ENCODE measurements at regions of chr2 and their contacts with region 1.

Region 1: DNA sequence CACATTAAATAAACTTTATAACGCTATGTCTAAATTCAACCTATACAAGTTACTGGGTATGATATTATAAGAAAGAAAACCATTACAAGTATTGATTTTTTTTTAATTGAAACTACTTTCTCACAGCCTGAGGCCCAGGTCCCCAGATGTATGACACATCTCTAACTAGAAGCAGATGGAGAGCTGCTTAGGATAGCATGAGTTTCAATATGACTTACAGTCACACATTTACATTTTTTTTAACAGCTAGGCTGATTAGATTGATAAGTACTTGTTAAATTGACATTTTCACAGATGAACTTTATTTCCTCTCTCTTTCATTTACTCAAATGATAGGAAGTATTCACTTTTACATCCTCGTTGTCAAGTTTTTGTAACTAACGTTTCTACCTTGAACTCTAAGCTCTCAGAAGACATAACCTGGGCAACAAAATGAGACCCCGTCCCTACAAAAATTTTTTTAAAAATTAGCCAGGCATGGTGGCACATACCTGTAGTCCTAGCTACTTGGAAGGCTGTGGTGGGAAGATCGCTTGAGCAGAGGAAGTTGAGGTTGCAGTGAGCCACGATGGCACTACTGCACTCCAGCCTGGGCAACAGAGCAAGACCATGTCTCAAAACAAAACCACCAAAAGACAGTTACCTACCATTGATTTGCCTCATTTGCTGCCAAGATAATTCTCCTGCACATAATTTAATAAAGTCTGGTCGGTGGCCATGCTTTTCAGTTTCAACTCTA is 52.4 kb downstream of the STK39 start:
- DNase-seq: peak in 1 of 2 donors; percentile 58
- ATAC-seq: peak; percentile 85 to 91 (median 86)
- H3K4me3 ChIP-seq: no peak overlapping the region
- H3K4me3 Mint-ChIP-seq: peak overlapping the region; percentile 89
- H3K27ac ChIP-seq: peak overlapping the region; percentile 61
- H3K27ac Mint-ChIP-seq: peak overlapping the region; percentile 94 to 96
- H3K4me1 ChIP-seq: peaks cover 58% of the 10 kb centered on the region
- H3K4me1 Mint-ChIP-seq: peaks cover 82 to 89% of the 10 kb centered on the region in 2 donors
- H3K27me3 ChIP-seq: no peaks in the 10 kb centered on the region
- H3K27me3 Mint-ChIP-seq: no peaks in the 10 kb centered on the region
- CTCF ChIP-seq: no peak

Region 2: DNA sequence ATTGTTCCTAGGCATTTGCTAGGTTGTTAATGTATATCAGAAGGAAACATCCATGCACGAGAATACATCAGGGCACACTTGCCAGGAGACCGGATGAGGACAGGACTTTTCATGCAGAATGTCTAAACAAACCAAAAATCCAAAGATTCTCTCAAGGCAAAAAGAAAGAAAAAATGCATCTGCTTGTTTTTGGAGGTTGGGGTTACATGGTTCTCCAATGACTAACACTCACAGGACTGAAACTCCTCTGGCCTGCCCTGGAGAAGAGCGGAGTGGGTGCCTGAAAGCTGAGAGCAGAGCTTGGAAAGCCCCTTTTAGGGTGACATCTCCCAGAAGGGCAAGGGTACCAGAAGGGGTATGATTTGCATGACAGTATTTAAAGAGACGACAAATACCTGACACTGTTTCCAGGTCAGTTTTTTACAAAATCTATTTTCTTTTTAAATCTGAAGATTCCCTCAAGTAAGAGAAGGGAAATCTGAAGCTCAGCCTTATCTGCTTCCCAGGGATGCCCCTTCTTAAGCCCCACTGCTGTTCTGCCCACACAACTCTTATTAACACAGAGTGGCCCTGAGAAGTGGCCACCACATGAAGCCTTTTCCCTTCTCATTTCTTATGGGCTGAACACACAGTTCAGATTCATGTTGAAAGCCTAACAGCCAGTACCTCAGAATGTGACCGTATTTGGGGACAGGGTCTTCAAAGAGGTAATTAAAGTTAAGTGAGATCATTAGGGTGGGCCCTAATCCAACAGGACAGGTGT is 163.9 kb before region 1 on chr2:
- intact Hi-C with region 1: no loop called
- DNase-seq: no peak
- ATAC-seq: no peak
- H3K4me3 ChIP-seq: no peak overlapping the region
- H3K4me3 Mint-ChIP-seq: no peak overlapping the region
- H3K27ac ChIP-seq: no peak overlapping the region
- H3K27ac Mint-ChIP-seq: peak overlapping the region; percentile 51 to 63
- H3K4me1 ChIP-seq: no peaks in the 10 kb centered on the region
- H3K4me1 Mint-ChIP-seq: peaks cover 37 to 41% of the 10 kb centered on the region in 2 donors
- H3K27me3 ChIP-seq: no peaks in the 10 kb centered on the region
- H3K27me3 Mint-ChIP-seq: no peaks in the 10 kb centered on the region
- CTCF ChIP-seq: no peak

Region 3: DNA sequence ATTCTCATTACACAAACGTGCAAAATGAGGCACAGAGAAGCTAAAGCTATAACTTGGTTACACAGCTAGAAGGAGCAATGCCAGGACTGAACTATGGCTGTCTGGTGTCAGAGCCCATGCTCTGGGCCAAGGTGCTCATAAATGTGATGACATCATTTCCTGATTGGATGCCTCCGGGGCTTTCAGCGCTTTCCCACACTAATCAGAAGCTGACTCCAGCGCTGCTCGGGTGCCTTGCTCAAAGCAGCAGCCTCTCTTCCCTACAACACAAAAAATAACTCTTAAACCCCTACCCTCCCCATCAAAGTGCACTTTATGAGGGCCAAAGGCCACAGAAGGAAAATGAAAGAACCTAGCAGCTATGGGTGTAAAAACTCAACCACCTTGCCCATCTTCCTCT is 38.3 kb before region 1 on chr2:
- intact Hi-C with region 1: no loop called
- DNase-seq: peak in 1 of 2 donors; percentile 11
- ATAC-seq: no peak
- H3K4me3 ChIP-seq: no peak overlapping the region
- H3K4me3 Mint-ChIP-seq: no peak overlapping the region
- H3K27ac ChIP-seq: no peak overlapping the region
- H3K27ac Mint-ChIP-seq: peak overlapping the region; percentile 50 to 65
- H3K4me1 ChIP-seq: no peaks in the 10 kb centered on the region
- H3K4me1 Mint-ChIP-seq: peaks cover 39 to 45% of the 10 kb centered on the region in 2 donors
- H3K27me3 ChIP-seq: no peaks in the 10 kb centered on the region
- H3K27me3 Mint-ChIP-seq: no peaks in the 10 kb centered on the region
- CTCF ChIP-seq: no peak

Region 4: DNA sequence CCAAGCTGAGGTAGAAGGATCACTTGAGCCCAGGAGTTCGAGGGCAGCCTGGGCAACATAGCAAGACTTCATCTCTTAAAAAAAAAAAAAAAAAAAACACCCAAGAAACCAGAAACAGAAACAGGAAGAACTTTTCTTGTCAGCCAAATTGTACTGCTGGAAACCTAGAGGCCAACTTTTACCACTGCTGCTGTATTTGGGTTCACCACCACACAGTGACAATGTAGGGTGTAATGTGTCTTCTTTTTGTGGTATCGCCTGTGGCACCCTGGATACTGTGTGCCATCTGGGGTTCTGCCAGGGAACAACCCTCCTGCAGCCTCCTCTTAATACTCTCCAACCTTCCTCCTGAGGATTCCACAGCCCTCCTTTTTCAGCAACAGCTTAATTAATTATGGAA is 20.2 kb before region 1 on chr2:
- intact Hi-C with region 1: loop called (anchors 2 kb)
- DNase-seq: peak; percentile 35 to 65
- ATAC-seq: peak; percentile 88 to 97 (median 90)
- H3K4me3 ChIP-seq: peak overlapping the region; percentile 10
- H3K4me3 Mint-ChIP-seq: peak overlapping the region; percentile 78
- H3K27ac ChIP-seq: peak overlapping the region; percentile 58
- H3K27ac Mint-ChIP-seq: peak overlapping the region; percentile 85 to 96
- H3K4me1 ChIP-seq: peaks cover 26% of the 10 kb centered on the region
- H3K4me1 Mint-ChIP-seq: peaks cover 70 to 75% of the 10 kb centered on the region in 2 donors
- H3K27me3 ChIP-seq: no peaks in the 10 kb centered on the region
- H3K27me3 Mint-ChIP-seq: no peaks in the 10 kb centered on the region
- CTCF ChIP-seq: no peak

Region 5: GRCh38 chr2:168210895-168211570 is 16.1 kb after region 1 on chr2:
- intact Hi-C with region 1: loop called (anchors 2 kb)
- DNase-seq: peak in 1 of 2 donors; percentile 23
- ATAC-seq: peak; percentile 80 to 86 (median 83)
- H3K4me3 ChIP-seq: no peak overlapping the region
- H3K4me3 Mint-ChIP-seq: peak overlapping the region; percentile 55
- H3K27ac ChIP-seq: no peak overlapping the region
- H3K27ac Mint-ChIP-seq: peak overlapping the region; percentile 27 to 84
- H3K4me1 ChIP-seq: peaks cover 16% of the 10 kb centered on the region
- H3K4me1 Mint-ChIP-seq: peaks cover 86 to 90% of the 10 kb centered on the region in 2 donors
- H3K27me3 ChIP-seq: no peaks in the 10 kb centered on the region
- H3K27me3 Mint-ChIP-seq: no peaks in the 10 kb centered on the region
- CTCF ChIP-seq: no peak

Region 6: DNA sequence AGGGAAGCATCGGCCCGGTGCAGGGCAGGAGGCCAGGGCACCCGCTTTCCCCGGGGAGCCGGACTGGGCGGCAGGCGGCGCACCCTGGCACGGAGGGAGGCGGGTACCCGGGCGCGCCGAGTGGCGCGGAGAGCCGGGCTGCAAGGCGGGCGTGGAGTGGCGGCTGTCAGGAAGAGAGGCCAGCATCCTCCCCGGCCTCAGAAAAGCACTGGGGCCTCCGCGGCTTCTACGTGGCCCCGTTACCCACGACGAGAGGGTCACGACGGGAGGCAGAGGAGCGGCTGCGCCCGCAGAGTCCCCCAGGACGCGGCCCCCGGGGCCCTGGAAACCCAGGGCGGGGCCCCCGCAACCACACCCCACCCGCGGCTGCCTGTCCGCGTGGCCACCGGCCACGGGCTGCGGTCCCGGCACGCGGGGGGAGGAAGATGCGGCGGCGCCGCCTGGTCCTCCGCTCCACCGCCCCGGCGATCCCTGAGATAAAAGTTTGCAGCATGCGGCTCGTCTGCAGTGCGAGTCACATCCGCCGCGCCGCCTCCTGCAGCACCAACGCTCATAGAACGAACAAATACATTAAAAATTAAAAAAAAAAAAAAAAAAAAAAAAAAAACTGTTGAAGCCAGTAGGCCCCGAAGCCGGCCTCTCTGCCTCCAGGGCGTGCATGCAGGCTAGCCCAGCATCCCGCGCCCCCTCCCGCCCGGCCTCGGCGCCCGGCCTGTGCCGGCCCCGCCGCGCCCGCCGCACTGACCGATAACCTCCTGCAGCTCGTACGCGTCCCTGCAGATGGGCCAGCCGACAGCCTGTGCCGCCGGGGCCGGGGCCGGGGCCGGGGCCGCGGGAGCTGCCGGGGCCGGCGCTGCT is 51.8 kb after region 1 on chr2:
- intact Hi-C with region 1: loop called (anchors 1 kb)
- DNase-seq: peak; percentile 80 to 91
- ATAC-seq: peak; percentile 58 to 77 (median 64)
- H3K4me3 ChIP-seq: peak overlapping the region; percentile 56
- H3K4me3 Mint-ChIP-seq: peak overlapping the region; percentile 95
- H3K27ac ChIP-seq: peak overlapping the region; percentile 66
- H3K27ac Mint-ChIP-seq: peak overlapping the region; percentile 92 to 93
- H3K4me1 ChIP-seq: peaks cover 28% of the 10 kb centered on the region
- H3K4me1 Mint-ChIP-seq: peaks cover 44 to 47% of the 10 kb centered on the region in 2 donors
- H3K27me3 ChIP-seq: no peaks in the 10 kb centered on the region
- H3K27me3 Mint-ChIP-seq: no peaks in the 10 kb centered on the region
- CTCF ChIP-seq: peak; percentile 13

Region 7: DNA sequence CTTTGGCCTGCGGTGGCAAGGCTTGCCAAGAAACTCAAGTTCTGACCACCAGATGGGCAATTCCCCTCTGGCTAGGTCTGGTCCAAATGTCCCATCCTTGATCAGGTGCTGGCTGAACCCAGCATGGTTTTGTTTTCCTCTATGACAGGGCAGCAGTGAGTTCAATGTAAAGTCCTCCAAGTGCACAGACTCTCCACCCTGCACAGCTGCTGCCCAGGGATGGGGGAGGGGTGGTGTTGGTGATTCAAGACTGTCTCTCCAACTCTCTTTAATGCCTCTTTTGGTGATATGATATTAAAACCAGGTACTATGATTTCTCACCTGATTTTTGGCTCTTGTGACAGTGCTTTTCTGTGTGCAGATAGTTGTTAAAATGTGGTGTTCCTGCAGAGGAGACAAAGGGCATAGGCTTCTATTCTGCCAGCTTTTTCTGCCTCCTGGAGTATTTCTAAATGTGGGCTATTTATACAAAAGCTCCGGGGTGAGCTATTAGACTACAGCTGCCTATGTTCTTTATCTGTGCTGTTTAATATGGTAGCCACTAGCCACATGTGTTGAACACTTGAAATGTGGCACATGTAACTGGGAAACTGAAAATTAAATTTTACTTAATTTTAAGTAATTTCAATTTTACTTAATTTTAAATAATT is 116.4 kb after region 1 on chr2:
- intact Hi-C with region 1: no loop called
- DNase-seq: no peak
- ATAC-seq: no peak
- H3K4me3 ChIP-seq: no peak overlapping the region
- H3K4me3 Mint-ChIP-seq: no peak overlapping the region
- H3K27ac ChIP-seq: no peak overlapping the region
- H3K27ac Mint-ChIP-seq: no peak overlapping the region
- H3K4me1 ChIP-seq: no peaks in the 10 kb centered on the region
- H3K4me1 Mint-ChIP-seq: peaks cover 0 to 9% of the 10 kb centered on the region in 2 donors
- H3K27me3 ChIP-seq: no peaks in the 10 kb centered on the region
- H3K27me3 Mint-ChIP-seq: no peaks in the 10 kb centered on the region
- CTCF ChIP-seq: no peak